AG04449 (cell line): ENCODE measurements at regions of chr19 and their contacts with region 1.

Region 1: GRCh38 chr19:3304871-3305423 is 61.4 kb upstream of the NFIC start:
- DNase-seq: no peak
- H3K4me3 ChIP-seq: no peak overlapping the region
- CTCF ChIP-seq: peak; percentile 70

Region 2: DNA sequence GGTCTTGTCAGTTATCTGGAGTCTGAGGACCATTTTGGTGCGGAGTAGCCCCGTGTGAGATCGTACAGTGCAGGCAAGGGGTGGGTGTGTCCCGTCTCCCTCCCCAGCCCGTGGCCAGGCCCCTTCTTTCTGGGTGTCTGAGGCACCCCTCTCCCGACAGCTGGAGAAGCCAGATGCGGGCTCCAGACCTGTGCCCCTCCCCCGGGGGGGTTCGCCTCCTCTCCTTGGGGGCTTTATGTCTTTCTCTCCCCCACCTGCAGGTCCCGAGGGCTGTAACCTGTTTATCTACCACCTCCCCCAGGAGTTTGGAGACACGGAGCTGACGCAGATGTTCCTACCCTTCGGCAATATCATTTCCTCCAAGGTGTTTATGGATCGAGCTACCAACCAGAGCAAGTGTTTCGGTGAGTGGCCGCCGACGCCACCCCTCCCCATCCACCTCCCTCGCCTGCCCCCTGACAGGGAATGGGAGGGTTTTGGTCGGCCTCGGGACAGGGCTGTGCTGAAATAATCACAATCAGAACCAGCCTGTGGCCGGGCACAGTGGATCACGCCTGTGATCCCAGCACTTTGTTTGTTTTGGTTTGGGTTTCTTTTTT is 14.9 kb before region 1 on chr19:
- CTCF ChIA-PET with region 1: interaction called, 63 read pairs
- POLR2A ChIA-PET with region 1: no interaction called
- DNase-seq: no peak
- H3K4me3 ChIP-seq: no peak overlapping the region
- CTCF ChIP-seq: no peak

Region 3: DNA sequence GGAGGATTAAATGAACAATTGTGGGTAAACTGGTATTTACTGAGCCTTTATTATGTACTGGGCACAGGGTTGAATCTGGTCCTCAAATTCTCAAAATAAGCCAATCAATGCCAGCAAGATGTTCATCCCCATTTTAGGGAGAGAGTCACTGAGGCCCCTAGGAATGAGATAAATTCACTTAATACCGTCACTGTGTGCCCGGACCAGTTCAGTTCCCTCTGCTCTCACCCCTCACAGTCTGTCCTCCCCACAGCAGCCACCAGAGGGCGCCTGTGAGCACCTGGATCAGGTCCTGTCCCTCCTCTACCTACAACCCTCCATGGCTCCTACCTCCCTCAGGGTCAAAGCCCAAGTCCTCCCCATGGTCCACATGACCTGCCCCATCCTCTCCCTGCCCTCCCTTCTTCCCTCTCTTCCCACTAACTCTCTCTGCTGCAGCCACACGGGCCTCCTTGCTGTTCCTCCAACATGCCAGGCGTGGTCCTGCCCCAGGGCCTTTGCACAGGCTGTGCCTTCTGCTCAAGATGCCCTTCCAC is 19.4 kb after region 1 on chr19:
- CTCF ChIA-PET with region 1: interaction called, 44 read pairs
- POLR2A ChIA-PET with region 1: no interaction called
- DNase-seq: no peak
- H3K4me3 ChIP-seq: no peak overlapping the region
- CTCF ChIP-seq: peak; percentile 78

Region 4: DNA sequence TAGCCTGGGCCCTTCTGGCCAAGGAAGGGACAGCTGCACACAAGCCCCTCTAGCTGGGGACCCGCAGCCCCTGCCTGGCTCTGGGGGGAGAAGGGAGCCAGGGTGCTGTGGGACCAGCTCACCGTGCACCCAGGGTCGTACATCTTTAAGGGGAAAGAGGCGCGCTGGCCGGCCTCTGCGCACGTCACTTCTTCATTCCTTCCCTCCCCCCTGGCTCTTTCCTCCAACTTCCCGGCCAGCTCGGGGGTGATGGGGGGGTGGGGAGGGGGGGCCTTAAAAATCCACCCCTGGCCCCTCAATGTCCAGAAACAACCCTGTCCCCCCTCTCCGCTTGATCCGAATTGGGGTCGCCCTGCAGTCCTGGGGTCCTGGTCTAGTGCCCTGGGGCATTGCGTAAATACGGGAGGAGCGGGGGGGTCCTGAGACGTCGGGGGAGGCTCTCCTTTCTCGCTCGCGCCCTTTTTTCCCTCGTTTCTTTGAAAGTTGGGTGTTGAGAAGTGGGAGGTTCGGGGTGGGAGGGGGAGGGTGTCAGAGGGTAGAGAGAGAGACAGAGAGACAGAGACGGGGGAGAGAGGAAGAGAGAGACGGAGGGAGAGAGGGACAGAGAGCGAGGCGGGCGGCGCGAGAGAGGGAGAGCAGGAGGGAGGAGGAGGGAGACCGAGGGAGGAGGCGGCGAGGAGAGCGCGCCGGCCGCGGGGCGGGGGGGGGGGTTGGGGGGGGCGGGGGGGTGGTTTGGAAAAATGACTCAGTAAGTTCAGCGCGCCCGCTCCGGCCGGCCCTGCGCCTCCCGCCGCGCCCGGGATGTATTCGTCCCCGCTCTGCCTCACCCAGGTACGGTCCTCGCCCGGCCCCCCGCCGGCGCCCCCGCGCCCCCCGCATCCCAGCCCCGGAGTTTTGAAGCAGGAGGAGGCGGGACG is 61.1 kb after region 1 on chr19 and contains the start of gene NFIC:
- CTCF ChIA-PET with region 1: no interaction called
- POLR2A ChIA-PET with region 1: no interaction called
- DNase-seq: peak; percentile 23
- H3K4me3 ChIP-seq: peak within 1 kb of the TSS; percentile 81
- CTCF ChIP-seq: no peak

Region 5: DNA sequence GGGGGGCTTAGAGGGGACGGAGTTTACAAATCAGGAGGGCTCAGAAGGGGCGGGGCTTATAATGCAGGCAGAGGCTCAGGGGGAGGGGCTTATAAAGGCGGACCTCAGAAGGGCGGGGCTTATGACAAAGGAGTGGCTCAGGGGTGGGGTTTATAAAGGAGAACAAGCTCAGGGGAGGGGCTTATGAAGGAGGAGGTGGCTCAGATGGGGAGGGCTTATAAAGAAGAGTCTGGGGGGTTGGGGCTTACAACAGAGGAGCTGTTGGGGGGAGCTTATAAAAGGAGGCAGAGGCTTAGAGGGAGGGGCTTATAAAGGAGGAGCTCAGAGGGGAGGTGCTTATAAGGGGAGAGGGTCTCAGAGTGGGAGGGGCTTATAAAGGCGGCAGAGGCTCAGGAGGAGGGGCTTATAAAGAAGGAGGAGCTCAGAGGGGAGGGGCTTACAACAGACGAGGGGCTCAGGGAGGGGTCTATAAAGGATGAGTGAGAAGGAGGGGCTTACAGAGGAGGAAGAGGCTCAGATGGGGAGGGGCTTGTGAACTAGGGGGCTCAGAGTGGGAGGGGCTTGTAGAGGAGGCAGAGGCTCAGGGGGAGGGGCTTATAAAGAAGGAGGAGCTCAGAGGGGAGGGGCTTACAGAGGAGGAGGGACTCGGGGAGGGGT is 174.4 kb after region 1 on chr19:
- CTCF ChIA-PET with region 1: interaction called, 129 read pairs
- POLR2A ChIA-PET with region 1: no interaction called
- DNase-seq: no peak
- H3K4me3 ChIP-seq: no peak overlapping the region
- CTCF ChIP-seq: no peak

Region 6: DNA sequence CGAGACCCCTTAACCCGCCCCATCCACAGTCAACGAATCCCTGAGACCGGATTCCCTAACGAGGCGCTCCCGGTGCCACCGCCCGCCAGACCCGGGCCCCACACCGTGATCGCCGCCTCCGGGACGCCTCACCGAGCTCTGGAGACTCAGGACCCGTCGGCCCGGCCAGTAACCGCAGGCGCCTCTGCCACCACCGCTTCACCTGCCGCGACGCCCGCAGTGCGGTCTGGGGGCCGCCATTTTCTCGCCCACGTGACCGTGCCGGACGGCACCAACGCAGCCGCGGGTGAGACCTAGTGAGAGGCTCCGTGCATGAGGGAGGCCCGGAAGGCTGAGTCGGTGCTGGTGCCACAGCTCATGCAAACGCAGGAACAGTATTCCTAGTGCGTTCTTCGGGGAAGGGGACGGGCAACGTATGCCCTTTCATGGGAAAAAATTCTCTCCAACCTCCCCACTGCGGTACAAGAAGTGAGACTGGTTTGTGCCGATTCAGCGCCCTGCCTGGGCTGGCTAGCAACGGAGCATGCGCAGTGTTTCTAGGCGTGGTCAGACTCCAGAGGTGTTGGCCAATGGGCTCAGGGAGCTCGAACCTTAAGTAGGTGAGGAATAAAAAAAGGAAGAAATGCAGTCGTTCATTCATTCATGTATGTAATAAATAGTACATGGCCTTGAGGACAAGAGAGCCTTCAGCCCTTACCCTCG is 195.6 kb after region 1 on chr19 and contains the start of gene DOHH:
- CTCF ChIA-PET with region 1: interaction called, 11 read pairs
- POLR2A ChIA-PET with region 1: no interaction called
- DNase-seq: peak; percentile 78
- H3K4me3 ChIP-seq: peak within 1 kb of the TSS; percentile 90
- CTCF ChIP-seq: no peak

Region 7: DNA sequence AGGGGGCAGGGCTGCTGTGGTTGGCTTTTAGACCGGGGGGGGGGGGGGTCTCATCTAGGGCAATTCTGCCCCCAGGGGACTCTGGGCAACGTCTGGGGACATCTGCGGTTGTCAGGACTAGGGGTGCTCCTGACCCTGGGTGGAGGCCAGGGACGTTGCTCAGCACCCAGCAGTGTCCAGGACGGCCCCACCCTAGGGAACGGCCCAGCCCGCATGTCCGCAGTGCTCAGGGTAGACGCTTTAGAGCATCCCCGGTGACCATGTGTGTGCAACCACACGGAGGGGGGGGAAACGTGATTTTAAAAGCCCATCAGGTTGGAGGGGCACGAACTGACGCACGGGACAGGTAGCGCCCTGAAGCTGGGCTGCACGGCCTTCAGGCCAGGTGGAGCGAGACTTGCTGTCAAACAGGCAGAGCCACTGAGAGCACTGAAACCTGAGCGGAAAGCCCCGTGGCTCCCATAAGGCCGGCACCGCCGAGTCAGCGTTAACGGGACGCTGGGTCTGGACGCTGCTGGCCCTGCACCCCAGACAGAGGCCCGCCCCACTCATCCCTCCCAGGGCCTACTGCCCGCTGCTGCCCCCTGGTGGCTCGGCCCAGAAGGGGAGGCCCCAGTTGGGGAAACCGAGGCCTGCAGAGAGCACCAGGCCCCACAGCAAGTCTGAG is 313.3 kb after region 1 on chr19:
- CTCF ChIA-PET with region 1: interaction called, 10 read pairs
- POLR2A ChIA-PET with region 1: no interaction called
- DNase-seq: no peak
- H3K4me3 ChIP-seq: no peak overlapping the region
- CTCF ChIP-seq: peak; percentile 90